Endothelial cell of umbilical vein (primary cell): ENCODE measurements at regions of chr11 and their contacts with region 1.

Region 1: GRCh38 chr11:102810945-102811660 is 13.1 kb upstream of the MMP1 start:
- DNase-seq: peak; percentile 34
- H3K4me3 ChIP-seq: no peak overlapping the region
- H3K27ac ChIP-seq: no peak overlapping the region
- H3K4me1 ChIP-seq: no peaks in the 10 kb centered on the region
- H3K27me3 ChIP-seq: peaks cover 10 to 13% of the 10 kb centered on the region in 2 experiments
- CTCF ChIP-seq: peak; percentile 28 to 43
- POLR2A ChIP-seq: no peak

Region 2: DNA sequence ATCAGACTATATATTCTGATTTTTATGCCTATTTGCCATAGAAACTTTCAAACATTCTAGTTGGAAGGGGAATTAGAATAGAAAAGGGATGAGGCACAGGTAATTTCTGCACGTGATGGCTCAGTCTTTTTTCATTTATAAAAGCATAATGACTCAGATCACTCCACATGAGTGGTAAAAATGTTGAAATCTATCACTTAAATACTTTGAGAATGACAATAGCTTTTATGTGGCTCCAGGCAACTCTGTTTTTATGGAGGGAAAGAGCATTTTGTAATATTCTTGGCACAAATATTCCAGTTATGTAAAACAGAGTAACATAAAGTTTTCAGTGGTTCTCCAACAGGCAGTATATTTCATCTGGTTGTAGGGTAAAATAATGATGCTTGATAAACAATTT is 38.2 kb after region 1 on chr11:
- CTCF ChIA-PET with region 1: no interaction called
- POLR2A ChIA-PET with region 1: no interaction called
- dilution Hi-C with region 1: no loop called
- intact Hi-C with region 1: no loop called
- DNase-seq: no peak
- H3K4me3 ChIP-seq: no peak overlapping the region
- H3K27ac ChIP-seq: no peak overlapping the region
- H3K4me1 ChIP-seq: no peaks in the 10 kb centered on the region
- H3K27me3 ChIP-seq: peaks cover 5 to 10% of the 10 kb centered on the region in 2 experiments
- CTCF ChIP-seq: no peak
- POLR2A ChIP-seq: no peak

Region 3: DNA sequence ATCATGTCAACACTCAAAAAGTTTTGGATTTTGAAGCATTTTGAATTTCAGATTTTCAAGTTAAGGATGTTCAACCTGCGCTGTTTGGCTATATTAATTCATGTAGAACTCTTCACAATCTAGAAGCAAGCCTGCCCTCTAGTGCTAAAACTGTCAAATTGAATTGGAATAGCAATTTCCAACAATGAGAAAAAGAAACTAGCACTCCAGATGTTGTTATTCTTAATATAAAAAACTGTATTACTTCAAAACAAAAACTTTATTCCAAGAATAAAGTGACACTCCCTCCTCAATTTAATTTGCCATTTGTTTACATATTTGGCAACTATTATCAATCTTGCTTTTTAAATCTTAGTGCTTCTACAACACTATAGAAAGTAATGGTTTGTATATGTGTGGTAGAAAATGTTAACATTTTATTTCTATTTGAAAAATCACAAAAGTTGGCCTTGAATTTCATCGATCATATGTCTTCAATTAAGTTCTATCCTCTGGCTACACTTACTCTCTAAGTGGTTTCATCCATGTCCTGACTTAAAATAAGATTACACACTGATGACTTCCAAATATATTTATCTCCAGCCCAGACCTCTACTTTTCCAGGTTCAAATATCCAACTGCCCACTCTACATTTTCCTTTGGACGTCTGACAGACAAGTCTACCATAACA is 244.3 kb after region 1 on chr11:
- CTCF ChIA-PET with region 1: no interaction called
- POLR2A ChIA-PET with region 1: no interaction called
- dilution Hi-C with region 1: no loop called
- intact Hi-C with region 1: loop called (anchors 1 kb)
- DNase-seq: peak; percentile 54
- H3K4me3 ChIP-seq: no peak overlapping the region
- H3K27ac ChIP-seq: no peak overlapping the region
- H3K4me1 ChIP-seq: no peaks in the 10 kb centered on the region
- H3K27me3 ChIP-seq: no peaks in the 10 kb centered on the region
- CTCF ChIP-seq: peak; percentile 43 to 45
- POLR2A ChIP-seq: no peak